ENCODE measurements at regions of chr2 and their contacts with region 1.

Region 1: DNA sequence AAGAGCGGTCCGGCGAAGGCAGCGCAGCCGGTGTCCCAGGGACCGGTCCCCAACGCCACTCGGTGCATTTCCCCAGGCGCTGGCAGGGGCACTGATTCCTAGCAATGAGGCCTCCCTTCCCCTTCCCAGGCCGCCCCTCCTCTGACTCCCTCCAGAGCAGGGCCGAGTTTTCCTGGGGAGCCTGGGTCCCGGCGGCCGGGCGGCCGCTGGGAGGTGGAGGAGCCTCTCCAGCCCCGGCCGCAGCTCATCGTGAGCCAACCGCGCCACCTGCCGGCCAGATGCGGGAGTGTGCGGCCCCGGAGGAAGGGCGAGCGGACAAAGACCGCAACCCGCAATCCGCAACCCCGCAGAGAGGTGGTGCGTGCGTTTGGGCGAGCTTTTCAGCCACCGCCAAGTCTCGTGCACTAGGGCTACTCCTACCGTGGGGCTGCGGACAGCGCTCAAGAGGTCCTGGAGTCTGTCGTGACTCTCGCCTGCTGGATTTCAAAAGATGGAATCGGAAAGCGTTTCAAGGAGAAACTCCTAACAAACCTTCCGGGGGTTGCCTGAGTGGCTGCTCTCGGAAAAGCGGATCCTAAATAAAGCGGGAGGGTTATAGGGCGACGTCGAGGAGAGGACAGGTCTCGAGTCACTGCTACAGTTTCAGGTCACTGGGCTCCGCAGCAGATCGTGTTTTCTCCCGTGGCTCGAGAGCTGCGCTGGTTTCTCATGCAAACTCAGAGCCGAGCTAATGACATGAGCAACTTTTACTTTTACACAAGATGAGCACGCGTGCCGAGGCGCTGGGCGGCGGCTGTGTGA is 1.5 kb upstream of the EPHA4 start:
- DNase-seq: peak; percentile 78
- H3K4me3 Mint-ChIP-seq: peak overlapping the region; percentile 67
- H3K27ac Mint-ChIP-seq: no peak overlapping the region
- H3K4me1 Mint-ChIP-seq: peaks cover 33% of the 10 kb centered on the region
- H3K27me3 Mint-ChIP-seq: peaks cover 58% of the 10 kb centered on the region

Region 2: DNA sequence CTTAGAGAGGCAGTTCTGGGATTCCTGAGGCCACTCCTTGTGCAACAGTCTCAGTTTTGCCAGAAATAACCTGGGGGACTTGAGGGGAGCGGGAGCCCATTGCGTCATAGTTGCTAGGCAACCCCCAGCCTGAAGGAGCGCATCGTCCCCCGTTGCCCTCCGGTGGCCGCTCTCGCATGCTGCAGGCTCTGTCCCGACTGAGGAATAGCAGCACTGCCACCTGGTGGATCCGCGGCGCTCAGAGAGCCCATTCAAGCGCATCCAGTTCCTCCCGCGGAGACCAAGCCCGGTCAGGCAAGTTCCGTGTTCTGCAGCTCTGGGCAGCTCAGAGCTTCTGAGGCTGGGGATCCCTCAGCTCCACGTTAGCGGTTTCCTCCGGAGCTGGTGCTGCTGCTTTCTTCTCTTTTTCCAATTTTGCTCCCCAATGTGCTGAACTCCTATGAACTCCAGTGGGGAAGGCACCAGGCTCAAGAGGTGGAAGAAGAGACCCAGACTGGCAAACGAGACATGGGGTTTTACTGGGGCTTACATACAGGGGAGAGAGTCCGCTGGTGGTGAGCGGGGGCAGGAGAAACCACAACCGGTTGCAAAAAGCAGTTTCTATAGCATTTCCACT is 1931.1 kb before region 1 on chr2:
- intact Hi-C with region 1: loop called (anchors 5 kb)
- DNase-seq: peak; percentile 83
- H3K4me3 Mint-ChIP-seq: no peak overlapping the region
- H3K27ac Mint-ChIP-seq: no peak overlapping the region
- H3K4me1 Mint-ChIP-seq: peaks cover 11% of the 10 kb centered on the region
- H3K27me3 Mint-ChIP-seq: peaks cover 11% of the 10 kb centered on the region

Region 3: GRCh38 chr2:220935789-220936321 is 637.8 kb before region 1 on chr2:
- intact Hi-C with region 1: loop called (anchors 5 kb)
- DNase-seq: peak; percentile 1
- H3K4me3 Mint-ChIP-seq: no peak overlapping the region
- H3K27ac Mint-ChIP-seq: peak overlapping the region; percentile 22
- H3K4me1 Mint-ChIP-seq: no peaks in the 10 kb centered on the region
- H3K27me3 Mint-ChIP-seq: no peaks in the 10 kb centered on the region

Region 4: DNA sequence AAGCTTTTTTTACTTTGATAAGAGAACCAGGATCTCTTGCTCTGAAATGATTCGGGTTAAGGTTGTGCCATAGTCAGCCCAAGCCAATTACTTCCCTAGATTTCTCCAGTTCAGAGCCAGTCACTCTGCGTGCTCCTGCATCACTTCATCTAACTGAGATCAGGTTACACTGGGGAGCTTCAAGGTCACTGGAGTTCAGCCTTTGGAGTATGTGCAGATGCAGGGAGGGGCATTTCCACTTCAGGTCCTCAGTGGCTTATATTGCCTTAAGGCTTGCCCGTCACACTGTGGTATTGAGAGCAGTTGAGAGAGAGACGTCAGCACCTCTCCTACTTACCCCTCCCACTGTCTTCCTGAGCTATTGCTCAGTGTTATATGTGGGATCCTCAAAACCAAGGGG is 319.3 kb before region 1 on chr2:
- intact Hi-C with region 1: no loop called
- DNase-seq: no peak
- H3K4me3 Mint-ChIP-seq: no peak overlapping the region
- H3K27ac Mint-ChIP-seq: no peak overlapping the region
- H3K4me1 Mint-ChIP-seq: no peaks in the 10 kb centered on the region
- H3K27me3 Mint-ChIP-seq: no peaks in the 10 kb centered on the region

Region 5: DNA sequence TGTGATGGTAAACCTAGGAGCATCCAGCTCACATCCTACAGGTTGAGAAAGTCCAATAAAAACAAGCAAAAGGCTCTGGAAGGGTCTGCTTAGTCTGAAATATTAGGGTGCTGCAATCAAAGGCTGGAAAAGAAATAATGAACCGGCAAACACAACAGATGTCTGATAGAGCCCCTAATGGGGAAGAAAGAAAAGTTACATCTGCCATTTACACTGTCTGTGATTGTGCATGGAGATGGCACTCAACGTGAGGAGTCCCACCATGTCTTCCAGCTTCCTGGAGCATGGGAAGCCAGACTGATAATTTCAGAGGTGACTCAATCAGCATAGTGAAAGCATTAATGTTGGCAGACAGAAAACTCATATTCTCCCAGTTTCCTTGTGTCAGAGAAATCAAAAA is 309.3 kb before region 1 on chr2:
- intact Hi-C with region 1: loop called (anchors 5 kb)
- DNase-seq: no peak
- H3K4me3 Mint-ChIP-seq: no peak overlapping the region
- H3K27ac Mint-ChIP-seq: no peak overlapping the region
- H3K4me1 Mint-ChIP-seq: no peaks in the 10 kb centered on the region
- H3K27me3 Mint-ChIP-seq: no peaks in the 10 kb centered on the region

Region 6: DNA sequence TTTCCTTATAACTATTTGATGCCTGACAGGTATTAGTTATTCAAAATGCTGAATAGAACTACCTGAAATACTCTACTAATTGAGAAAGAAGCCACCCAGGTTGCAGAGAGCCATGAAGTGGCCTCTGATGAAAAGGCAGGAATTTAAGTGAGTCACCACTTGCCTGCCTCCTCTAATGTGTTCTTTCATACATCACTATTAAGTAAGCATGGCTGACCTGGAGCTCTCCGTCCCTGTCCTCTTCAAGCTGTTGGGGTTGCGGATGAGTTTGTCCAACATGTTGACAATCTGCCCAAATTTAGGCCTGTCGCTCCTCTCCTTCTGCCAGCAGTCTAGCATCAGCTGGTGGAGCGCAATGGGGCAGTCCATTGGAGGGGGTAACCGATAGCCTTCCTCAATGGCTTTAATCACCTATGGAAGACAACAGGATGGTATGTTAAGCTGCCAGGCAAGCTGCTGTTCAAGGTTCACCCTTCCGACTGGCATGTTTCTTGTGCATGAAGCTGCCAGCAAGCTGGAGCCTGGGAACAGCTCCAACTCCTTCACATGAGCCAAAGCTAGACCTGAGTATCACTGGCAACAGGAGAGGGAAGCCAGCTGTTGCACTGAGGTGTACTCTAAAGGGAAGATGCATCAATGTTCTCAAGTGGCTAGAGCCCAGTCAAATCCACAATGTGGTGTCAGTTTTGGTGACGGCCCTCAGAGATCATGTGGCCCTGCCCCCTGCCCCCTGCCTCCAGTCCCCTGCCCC is 143.7 kb before region 1 on chr2:
- intact Hi-C with region 1: loop called (anchors 5 kb)
- DNase-seq: no peak
- H3K4me3 Mint-ChIP-seq: no peak overlapping the region
- H3K27ac Mint-ChIP-seq: no peak overlapping the region
- H3K4me1 Mint-ChIP-seq: no peaks in the 10 kb centered on the region
- H3K27me3 Mint-ChIP-seq: no peaks in the 10 kb centered on the region

Region 7: GRCh38 chr2:221549143-221549542 is 24.5 kb before region 1 on chr2:
- intact Hi-C with region 1: loop called (anchors 2 kb)
- DNase-seq: peak; percentile 1
- H3K4me3 Mint-ChIP-seq: no peak overlapping the region
- H3K27ac Mint-ChIP-seq: peak overlapping the region; percentile 42
- H3K4me1 Mint-ChIP-seq: peaks cover 23% of the 10 kb centered on the region
- H3K27me3 Mint-ChIP-seq: no peaks in the 10 kb centered on the region

Measured in activated T-helper 1 cell treated with anti-CD3 and anti-CD28 coated beads, Interleukin-12 subunit alpha, Interleukin-12 subunit beta, Interleukin-2, Interleukin-4 antibody, amounts not matched to agents 30 ng/mL and 10 ng/mL and 1 ng/mL, durations not matched to agents 14 hours and 24 hours and 36 hours (primary cell).